Panc1 (cell line): ENCODE measurements at regions of chr11 and their contacts with region 1.

Region 1: DNA sequence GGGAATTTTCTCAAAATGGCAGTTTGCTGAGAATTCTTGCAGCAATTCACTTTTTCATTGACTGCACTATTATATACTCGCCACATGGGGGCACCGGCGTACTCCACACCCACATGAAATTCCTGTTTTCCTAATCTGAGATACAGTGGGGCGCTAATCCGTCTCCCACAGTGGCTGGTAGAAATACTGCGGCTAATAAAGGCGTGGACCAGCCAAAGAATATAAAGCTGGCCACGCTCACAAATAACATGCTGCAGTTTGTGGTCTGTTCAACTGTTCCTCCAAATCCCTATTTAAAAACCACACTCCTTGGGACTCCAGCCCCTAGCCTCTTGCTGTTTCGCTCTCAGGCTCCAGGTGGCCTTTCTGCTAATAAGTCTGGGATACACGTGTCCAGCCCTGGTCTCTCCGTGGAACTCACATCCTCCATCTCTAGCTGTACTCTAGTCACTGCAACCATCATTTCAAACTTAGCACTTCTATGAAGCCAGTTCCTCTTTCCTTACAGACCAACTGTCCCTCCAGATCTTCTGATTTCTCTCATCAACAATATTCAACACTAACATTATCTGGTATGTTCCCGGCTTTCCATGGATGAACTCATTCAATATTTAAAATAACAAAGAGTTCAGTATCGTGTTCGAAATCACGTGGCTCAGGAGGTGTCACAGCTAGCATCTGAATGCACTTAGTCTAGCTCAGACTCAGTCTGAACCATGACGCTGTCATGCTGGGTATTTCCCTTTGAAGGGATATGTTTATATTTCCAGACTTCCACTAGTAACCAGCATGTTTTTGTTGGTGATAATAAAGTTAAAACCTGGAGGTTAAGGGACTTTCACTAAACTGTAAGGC is 22.0 kb downstream of the TBRG1 start:
- DNase-seq: peak; percentile 71
- ATAC-seq: peak; percentile 94
- H3K4me3 ChIP-seq: peak overlapping the region; percentile 6 to 44; a peak in 2 of 4 replicates
- H3K27ac ChIP-seq: no peak overlapping the region
- H3K4me1 ChIP-seq: no peaks in the 10 kb centered on the region
- H3K27me3 ChIP-seq: no peaks in the 10 kb centered on the region
- CTCF ChIP-seq: peak; percentile 98

Region 2: GRCh38 chr11:124625504-124626168 is 19.0 kb before region 1 on chr11:
- CTCF ChIA-PET with region 1: interaction called, 19 read pairs
- POLR2A ChIA-PET with region 1: no interaction called
- in situ Hi-C with region 1: no loop called
- intact Hi-C with region 1: no loop called
- DNase-seq: no peak
- ATAC-seq: no peak
- H3K4me3 ChIP-seq: no peak overlapping the region
- H3K27ac ChIP-seq: no peak overlapping the region
- H3K4me1 ChIP-seq: peaks cover 15% of the 10 kb centered on the region
- H3K27me3 ChIP-seq: peaks cover 4% of the 10 kb centered on the region; the same call in 1 of the 2 replicates
- CTCF ChIP-seq: no peak

Region 3: DNA sequence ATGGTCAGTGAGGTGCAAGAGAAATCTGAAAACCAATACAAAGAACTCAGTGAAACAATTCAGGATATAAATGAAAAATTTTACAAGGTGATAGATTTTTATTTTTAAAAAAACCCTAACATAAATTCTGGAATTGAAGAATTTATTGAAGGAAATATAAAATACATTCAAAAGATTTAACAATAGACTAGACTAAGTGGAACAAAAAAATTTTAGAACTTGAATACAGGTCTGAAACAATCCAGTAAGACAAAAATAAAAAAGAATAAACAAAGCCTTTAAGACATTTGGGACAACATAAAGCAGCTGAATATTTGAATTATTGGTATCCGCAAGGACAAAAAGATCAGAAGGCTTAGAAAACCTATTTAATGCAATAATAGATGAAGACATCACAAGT is 37.8 kb after region 1 on chr11:
- CTCF ChIA-PET with region 1: no interaction called
- POLR2A ChIA-PET with region 1: no interaction called
- in situ Hi-C with region 1: no loop called
- intact Hi-C with region 1: no loop called
- DNase-seq: no peak
- ATAC-seq: no peak
- H3K4me3 ChIP-seq: no peak overlapping the region
- H3K27ac ChIP-seq: no peak overlapping the region
- H3K4me1 ChIP-seq: no peaks in the 10 kb centered on the region
- H3K27me3 ChIP-seq: no peaks in the 10 kb centered on the region
- CTCF ChIP-seq: no peak

Region 4: GRCh38 chr11:124865921-124866583 is 221.4 kb after region 1 on chr11:
- CTCF ChIA-PET with region 1: no interaction called
- POLR2A ChIA-PET with region 1: no interaction called
- in situ Hi-C with region 1: no loop called
- intact Hi-C with region 1: loop called (anchors 1 kb)
- DNase-seq: no peak
- ATAC-seq: peak; percentile 46; the same call in 1 of the 2 replicates
- H3K4me3 ChIP-seq: peak overlapping the region; percentile 21 to 43
- H3K27ac ChIP-seq: no peak overlapping the region
- H3K4me1 ChIP-seq: peaks cover 28% of the 10 kb centered on the region
- H3K27me3 ChIP-seq: peaks cover 82% of the 10 kb centered on the region
- CTCF ChIP-seq: peak; percentile 95